BJ (cell line): ENCODE measurements at regions of chr3 and their contacts with region 1.

Region 1: GRCh38 chr3:29280404-29281093 is at the start of gene RBMS3:
- DNase-seq: peak; percentile 83
- H3K4me3 ChIP-seq: peak within 1 kb of the TSS; percentile 67
- H3K27me3 ChIP-seq: no peaks in the 10 kb centered on the region
- CTCF ChIP-seq: peak; percentile 73
- polyA plus RNA-seq, gene RBMS3: 13.9 and 14.5 TPM in 2 replicates

Region 2: GRCh38 chr3:29189328-29189727 is 91.2 kb before region 1 on chr3:
- CTCF ChIA-PET with region 1: no interaction called
- POLR2A ChIA-PET with region 1: interaction called, 19 read pairs
- DNase-seq: no peak
- H3K4me3 ChIP-seq: no peak overlapping the region
- H3K27me3 ChIP-seq: no peaks in the 10 kb centered on the region
- CTCF ChIP-seq: no peak

Region 3: DNA sequence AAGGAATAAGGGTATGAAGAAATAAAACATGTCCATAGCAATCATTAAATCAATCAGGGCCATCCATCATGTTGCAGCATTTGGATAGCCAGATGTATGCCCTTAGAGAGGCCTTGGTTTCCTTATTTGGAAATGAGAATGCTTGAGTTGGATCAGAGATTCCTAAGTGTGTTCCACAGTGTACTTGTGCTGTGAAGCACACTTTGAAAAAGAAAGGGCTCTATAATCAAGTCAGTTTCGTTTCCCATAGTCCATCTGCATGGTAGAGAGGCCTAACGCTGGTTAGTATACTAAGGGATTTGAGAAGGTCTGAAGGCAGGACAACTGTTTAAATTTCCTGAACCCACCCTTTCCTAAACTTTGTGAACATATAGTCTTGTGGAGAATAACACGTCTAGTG is 31.2 kb after region 1 on chr3:
- CTCF ChIA-PET with region 1: interaction called, 3 read pairs
- POLR2A ChIA-PET with region 1: interaction called, 16 read pairs
- DNase-seq: no peak
- H3K4me3 ChIP-seq: no peak overlapping the region
- H3K27me3 ChIP-seq: no peaks in the 10 kb centered on the region
- CTCF ChIP-seq: no peak

Region 4: DNA sequence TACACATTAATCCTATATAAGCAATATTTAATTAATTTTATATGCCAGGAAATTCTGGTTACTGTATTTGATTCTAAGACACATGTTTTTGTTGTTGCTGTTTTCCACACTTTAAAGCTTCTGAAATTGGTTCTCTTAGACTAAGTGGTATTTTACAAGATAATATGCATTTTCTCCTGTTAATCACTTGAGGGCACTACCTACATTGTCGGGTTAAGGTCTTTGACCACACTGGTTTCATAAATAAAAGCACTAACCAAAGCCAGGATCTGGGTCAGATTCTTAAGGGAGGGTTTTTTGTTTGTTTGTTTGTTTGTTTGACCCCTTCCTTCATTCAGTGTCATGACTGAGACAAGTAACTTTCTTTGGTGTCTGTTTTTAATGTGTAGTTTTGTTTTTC is 590.5 kb after region 1 on chr3:
- CTCF ChIA-PET with region 1: no interaction called
- POLR2A ChIA-PET with region 1: interaction called, 13 read pairs
- DNase-seq: no peak
- H3K4me3 ChIP-seq: no peak overlapping the region
- H3K27me3 ChIP-seq: no peaks in the 10 kb centered on the region
- CTCF ChIP-seq: no peak